ENCODE measurements at regions of chr5 and their contacts with region 1.

Region 1: DNA sequence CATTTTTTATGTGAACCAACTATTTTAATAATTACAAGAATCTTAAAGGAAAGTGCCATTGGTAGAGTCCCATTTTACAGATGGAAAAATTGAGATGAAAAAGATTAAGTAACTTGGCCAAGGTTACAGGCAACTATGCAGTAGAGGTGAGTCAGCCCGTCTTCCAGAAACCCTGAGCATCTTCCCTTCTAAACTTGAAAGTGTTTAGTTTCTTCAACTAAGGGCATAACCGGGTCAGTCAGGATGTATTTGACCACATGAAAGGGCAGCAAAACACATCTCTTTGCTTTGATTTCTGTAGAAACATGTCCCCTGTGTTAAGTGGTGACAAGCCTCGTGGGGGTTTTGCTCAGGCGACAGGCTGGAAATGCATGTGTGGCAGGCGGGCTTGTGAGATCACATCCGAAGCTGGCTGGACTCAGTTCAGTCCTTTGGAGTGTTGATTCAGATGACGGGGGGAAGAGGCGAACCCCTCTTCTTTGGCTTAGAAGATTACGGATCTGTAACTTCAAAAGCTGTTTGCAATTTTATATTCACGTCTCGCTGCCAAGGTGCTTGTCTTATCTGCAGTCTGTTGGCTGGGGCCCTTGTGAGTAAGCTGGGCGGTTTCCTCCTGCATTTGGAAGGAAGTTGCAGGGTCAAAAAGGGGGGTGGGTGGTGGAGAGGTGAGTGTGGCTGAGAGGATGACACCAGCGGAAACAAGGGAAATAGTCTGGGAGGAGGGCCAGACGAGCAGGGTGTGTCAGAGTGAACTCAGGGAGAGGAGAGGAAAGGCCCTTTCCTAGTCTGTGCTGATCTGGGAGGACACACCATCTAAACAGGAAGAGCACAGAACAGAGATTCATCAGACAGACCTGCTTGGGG is 78.9 kb upstream of the RPS23 start:
- DNase-seq: peak; percentile 97
- ATAC-seq: peak; percentile 99
- H3K4me3 ChIP-seq: peak overlapping the region; percentile 36; the same call in 1 of the 2 replicates
- H3K27ac ChIP-seq: peak overlapping the region; percentile 98
- H3K4me1 ChIP-seq: peaks cover 30% of the 10 kb centered on the region
- H3K27me3 ChIP-seq: no peaks in the 10 kb centered on the region
- CTCF ChIP-seq: no peak

Region 2: GRCh38 chr5:82312373-82312856 is 44.6 kb before region 1 on chr5:
- CTCF ChIA-PET with region 1: interaction called, 13 read pairs
- POLR2A ChIA-PET with region 1: no interaction called
- intact Hi-C with region 1: no loop called
- DNase-seq: peak; percentile 83
- ATAC-seq: peak; percentile 90
- H3K4me3 ChIP-seq: no peak overlapping the region
- H3K27ac ChIP-seq: no peak overlapping the region
- H3K4me1 ChIP-seq: no peaks in the 10 kb centered on the region
- H3K27me3 ChIP-seq: no peaks in the 10 kb centered on the region
- CTCF ChIP-seq: peak; percentile 96

Region 3: DNA sequence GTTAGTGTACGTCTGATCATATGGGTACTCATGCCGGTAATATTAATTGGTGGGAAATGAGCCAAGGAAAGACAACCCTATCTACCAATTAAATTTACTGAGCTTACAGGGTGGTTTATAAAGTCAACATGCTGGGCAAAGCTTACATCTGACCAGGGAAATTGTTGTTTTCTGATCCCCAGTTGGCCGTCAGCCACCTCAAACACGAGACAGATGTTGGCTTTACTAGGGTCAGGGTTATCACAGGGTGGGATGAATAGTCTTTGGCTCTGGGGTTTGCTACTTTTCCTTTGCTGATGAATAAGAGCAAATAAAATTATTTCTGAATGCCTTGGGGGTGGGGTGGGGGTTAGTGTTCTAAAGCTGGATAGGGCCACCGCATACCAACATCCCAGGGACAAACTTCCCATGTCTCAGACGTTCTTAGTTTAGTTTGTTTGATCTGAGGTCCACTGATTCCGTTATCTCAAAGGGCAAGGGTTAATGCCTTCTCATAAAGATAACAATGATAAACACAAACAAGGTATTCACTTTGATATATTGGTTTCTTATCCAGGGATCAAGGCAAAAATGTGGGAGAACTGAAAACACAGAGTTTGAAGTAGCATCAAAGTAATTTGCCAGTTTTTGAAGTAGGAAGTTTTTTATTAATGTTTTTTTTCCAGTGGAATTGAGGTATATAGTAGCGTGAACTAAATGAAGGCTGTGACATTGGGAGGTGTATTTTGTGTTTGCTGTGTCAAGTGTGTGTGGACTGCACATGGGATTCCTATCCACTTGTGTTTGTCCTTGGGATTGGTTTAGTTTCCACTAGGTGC is 30.2 kb after region 1 on chr5:
- CTCF ChIA-PET with region 1: no interaction called
- POLR2A ChIA-PET with region 1: interaction called, 3 read pairs
- intact Hi-C with region 1: loop called (anchors 1 kb)
- DNase-seq: peak; percentile 93
- ATAC-seq: peak; percentile 74
- H3K4me3 ChIP-seq: no peak overlapping the region
- H3K27ac ChIP-seq: peak overlapping the region; percentile 99
- H3K4me1 ChIP-seq: peaks cover 38% of the 10 kb centered on the region
- H3K27me3 ChIP-seq: no peaks in the 10 kb centered on the region
- CTCF ChIP-seq: no peak

Region 4: GRCh38 chr5:82421119-82421518 is 64.1 kb after region 1 on chr5:
- CTCF ChIA-PET with region 1: interaction called, 3 read pairs
- POLR2A ChIA-PET with region 1: no interaction called
- intact Hi-C with region 1: loop called (anchors 2 kb)
- DNase-seq: peak; percentile 98
- ATAC-seq: peak; percentile 98
- H3K4me3 ChIP-seq: no peak overlapping the region
- H3K27ac ChIP-seq: peak overlapping the region; percentile 70
- H3K4me1 ChIP-seq: peaks cover 26% of the 10 kb centered on the region
- H3K27me3 ChIP-seq: no peaks in the 10 kb centered on the region
- CTCF ChIP-seq: peak; percentile 58

Region 5: GRCh38 chr5:82466986-82467561 is 110.0 kb after region 1 on chr5:
- CTCF ChIA-PET with region 1: interaction called, 10 read pairs
- POLR2A ChIA-PET with region 1: no interaction called
- intact Hi-C with region 1: no loop called
- DNase-seq: no peak
- ATAC-seq: no peak
- H3K4me3 ChIP-seq: no peak overlapping the region
- H3K27ac ChIP-seq: no peak overlapping the region
- H3K4me1 ChIP-seq: no peaks in the 10 kb centered on the region
- H3K27me3 ChIP-seq: no peaks in the 10 kb centered on the region
- CTCF ChIP-seq: no peak

Region 6: DNA sequence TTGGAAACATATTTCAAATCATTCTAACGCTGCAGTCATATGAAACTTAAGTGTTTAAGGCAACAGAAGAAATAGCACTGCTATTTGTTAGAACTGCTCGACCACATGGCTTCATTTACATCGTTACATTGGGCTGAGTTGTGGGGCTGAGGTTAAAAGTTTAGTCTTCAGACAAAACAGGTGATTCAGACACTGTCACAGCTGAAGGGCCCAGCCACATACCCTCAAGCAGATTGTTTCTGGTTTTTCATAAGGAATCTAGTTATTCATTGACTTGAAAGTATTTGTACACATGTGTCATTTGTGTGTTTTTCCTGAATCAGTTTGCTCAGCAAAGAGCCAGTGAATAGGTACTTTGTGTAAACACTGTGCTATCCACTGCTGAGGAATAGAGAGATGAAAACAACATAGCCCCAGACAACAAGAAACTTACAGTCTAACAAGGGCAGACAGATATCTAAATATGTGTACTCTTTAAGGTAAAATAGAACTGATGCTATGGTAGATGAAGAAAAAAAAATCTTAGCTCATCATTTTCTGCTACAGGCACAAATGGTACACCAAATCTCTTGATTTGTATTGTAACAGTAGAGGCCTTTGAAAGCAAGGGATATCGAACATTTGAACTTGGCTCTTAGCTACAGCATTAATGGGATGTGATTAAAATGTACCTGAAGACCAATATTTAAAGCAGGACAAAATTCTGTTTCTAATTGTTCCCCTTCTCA is 278.7 kb after region 1 on chr5:
- CTCF ChIA-PET with region 1: no interaction called
- POLR2A ChIA-PET with region 1: no interaction called
- intact Hi-C with region 1: loop called (anchors 2 kb)
- DNase-seq: peak; percentile 96
- ATAC-seq: peak; percentile 95
- H3K4me3 ChIP-seq: no peak overlapping the region
- H3K27ac ChIP-seq: peak overlapping the region; percentile 92
- H3K4me1 ChIP-seq: peaks cover 40% of the 10 kb centered on the region
- H3K27me3 ChIP-seq: no peaks in the 10 kb centered on the region
- CTCF ChIP-seq: no peak

Region 7: DNA sequence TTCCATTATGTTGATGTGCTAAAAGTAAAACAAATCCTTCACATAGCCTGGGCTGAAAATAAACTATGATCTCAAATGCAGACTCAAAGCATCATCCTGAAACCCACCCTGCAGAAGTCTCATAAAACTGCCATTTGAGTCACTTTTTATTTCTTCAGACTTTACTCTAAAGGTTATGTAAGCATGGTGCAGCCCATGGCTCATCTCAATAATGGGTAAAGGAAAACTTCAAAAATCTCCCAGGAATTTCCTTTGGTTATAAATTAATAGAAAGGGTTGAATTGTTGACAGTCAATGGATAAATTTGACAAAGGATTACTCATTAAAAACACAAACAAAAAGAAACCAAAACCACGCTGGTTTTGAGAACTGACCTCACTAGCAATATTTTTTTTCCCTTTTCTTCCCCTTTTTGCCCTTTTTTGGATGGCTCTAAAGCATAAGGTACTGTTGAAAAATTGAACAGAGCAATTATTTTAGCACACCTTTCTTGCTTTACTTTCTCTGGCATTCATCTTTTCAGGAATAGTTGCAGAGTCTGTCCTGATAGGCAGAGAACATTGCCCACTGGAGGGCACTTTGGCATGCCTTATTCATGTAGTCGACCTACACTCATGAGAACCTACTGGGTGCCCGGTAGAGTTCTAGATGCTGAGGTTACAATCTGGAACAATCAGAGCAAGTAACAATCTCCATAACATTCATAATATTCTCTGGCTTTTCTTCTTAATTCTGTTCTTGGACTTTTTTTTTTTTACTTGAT is 528.8 kb after region 1 on chr5:
- CTCF ChIA-PET with region 1: no interaction called
- POLR2A ChIA-PET with region 1: no interaction called
- intact Hi-C with region 1: loop called (anchors 5 kb)
- DNase-seq: peak; percentile 88
- ATAC-seq: peak; percentile 91
- H3K4me3 ChIP-seq: no peak overlapping the region
- H3K27ac ChIP-seq: peak overlapping the region; percentile 72
- H3K4me1 ChIP-seq: peaks cover 30% of the 10 kb centered on the region
- H3K27me3 ChIP-seq: no peaks in the 10 kb centered on the region
- CTCF ChIP-seq: peak; percentile 57

Measured in PC-3 (cell line).